Activated CD4-positive, alpha-beta T cell treated with anti-CD3 and anti-CD28 coated beads, Interleukin-2, amount 10 ng/mL, durations not matched to agents 24 days and 14 days (primary cell): ENCODE measurements at regions of chr10 and their contacts with region 1.

Region 1: DNA sequence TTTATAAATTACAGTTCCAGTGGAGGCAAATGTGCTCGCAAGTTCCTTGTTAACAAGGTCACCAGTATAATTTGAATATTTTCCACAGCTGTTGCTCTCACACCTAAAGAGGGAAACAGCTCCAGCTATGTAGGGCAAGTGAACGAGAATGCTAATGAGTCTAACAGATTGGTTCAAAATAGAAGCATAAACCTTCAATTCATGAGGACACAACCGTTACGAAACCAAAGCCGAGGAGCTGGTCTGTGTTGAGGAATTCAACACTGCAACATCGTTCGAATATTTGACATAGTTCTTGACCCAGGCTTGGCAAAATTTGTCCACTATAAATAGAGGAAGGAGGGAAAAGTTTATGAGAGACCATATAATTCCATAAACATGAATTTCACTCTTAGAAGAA is 161.3 kb downstream of the KLF6 start:
- DNase-seq: no peak
- H3K4me3 Mint-ChIP-seq: no peak overlapping the region
- H3K27ac Mint-ChIP-seq: no peak overlapping the region
- H3K4me1 Mint-ChIP-seq: peaks cover 29% of the 10 kb centered on the region
- H3K27me3 Mint-ChIP-seq: peaks cover 3% of the 10 kb centered on the region

Region 2: DNA sequence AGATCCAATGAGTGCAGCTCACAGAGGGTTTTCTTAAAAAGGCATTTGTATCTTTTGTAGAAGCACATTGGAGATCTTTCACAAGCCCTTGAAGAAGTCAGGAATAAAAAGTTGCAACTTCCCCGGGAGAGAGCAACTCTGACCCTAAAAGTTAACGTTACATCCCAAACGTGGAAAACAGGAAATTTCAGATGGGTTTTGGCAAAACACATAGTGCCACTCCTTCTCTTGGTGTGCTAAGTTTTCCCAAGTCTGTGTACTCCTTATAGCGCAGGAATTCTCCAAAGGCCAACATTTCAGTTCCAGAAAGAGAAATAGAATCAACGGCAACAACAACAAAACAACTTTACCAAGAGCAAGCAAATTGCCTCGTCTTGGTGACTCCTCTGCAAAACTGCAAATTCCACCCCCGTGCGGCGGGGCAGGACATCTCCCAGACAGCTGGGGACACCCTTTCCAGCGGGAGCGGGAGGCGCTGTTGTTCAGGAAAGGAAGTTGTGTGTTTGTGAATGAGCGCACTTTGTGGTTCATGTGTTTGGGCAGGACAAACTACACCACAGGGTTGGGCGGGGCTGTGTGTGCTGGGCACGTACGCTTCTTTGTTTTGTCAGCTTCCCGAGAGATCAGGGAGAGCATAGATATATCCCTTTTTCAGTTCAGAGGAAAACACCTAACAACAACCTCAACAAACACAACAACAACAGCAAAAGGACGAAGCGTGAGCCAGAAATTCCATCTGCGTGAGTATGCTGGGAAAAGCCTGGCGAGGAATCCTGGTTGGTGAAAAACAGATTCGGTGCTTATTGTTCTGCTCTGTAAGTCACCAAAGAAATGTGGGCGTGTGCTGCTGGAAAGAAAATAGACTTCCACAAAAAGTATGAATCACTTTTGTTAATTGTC is 156.4 kb before region 1 on chr10:
- intact Hi-C with region 1: loop called (anchors 2 kb)
- DNase-seq: peak; percentile 79
- H3K4me3 Mint-ChIP-seq: peak overlapping the region; percentile 82
- H3K27ac Mint-ChIP-seq: peak overlapping the region; percentile 96
- H3K4me1 Mint-ChIP-seq: peaks cover 51% of the 10 kb centered on the region
- H3K27me3 Mint-ChIP-seq: no peaks in the 10 kb centered on the region

Region 3: DNA sequence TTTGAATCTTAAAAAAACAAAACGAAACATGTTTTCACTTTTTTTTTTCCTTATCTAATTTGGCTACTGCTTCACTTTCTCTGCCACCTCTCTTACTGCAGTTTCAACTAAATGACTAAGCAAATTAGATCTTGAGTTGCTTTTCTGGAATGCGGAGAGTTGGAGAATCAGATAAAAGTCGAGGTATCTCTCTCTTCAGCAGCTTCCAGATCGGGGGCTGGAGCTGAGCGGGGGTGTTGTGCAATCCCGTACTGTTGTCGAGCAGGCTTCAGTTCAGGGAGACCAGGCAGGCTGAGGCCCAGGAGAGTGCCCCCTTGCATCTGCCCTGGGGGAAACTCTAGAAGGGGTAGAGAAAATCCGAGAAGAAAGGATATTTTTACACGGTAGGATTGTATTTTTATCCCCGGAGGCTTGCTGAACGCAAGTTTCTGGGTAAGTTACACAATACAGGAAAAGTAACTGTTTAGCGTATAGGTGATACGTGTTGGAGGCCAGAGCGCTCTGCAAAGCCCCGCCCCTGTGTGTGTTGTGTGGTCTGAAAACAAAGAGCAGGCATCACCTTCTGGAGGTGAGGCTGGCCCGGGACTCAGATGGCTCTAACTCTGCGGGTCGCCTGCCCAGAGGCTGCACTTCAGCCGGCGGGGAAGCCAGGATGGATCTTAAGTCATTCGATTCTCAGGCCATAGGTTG is 44.7 kb after region 1 on chr10:
- intact Hi-C with region 1: loop called (anchors 2 kb)
- DNase-seq: peak; percentile 89
- H3K4me3 Mint-ChIP-seq: peak overlapping the region; percentile 86
- H3K27ac Mint-ChIP-seq: peak overlapping the region; percentile 92
- H3K4me1 Mint-ChIP-seq: peaks cover 34% of the 10 kb centered on the region
- H3K27me3 Mint-ChIP-seq: peaks cover 2% of the 10 kb centered on the region

Region 4: DNA sequence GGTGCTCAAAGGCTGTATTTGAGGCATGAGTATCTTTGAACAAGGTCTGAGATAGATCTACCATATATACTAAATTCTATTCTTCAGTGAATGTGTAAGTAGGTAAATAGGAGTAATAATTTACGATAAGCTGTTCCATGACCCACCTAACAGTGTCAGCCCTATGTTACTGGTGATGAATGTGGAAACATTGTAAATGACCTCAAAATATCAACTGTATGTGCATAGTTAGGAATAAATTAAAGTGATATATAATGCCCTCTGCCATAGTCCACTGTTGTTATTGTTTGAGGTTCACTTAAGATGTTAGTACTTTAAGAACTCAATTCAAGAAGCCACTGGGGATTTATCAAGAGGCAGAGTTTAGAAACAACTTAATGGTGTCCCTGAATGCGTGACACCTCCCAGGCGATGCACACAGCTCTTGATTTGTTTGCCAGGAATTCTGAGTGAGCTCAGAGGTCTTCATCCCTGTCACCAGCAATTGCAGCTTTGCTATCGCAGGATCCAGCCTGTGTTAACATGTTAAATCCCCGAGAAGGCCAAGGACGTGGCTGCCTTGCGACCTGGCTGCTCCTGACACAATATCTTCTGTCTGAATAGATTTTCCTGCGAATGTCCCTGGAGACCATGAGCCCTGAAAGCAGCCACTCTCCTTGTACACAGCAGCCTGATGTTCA is 56.3 kb after region 1 on chr10:
- intact Hi-C with region 1: no loop called
- DNase-seq: no peak
- H3K4me3 Mint-ChIP-seq: no peak overlapping the region
- H3K27ac Mint-ChIP-seq: no peak overlapping the region
- H3K4me1 Mint-ChIP-seq: peaks cover 13% of the 10 kb centered on the region
- H3K27me3 Mint-ChIP-seq: peaks cover 5% of the 10 kb centered on the region

Region 5: DNA sequence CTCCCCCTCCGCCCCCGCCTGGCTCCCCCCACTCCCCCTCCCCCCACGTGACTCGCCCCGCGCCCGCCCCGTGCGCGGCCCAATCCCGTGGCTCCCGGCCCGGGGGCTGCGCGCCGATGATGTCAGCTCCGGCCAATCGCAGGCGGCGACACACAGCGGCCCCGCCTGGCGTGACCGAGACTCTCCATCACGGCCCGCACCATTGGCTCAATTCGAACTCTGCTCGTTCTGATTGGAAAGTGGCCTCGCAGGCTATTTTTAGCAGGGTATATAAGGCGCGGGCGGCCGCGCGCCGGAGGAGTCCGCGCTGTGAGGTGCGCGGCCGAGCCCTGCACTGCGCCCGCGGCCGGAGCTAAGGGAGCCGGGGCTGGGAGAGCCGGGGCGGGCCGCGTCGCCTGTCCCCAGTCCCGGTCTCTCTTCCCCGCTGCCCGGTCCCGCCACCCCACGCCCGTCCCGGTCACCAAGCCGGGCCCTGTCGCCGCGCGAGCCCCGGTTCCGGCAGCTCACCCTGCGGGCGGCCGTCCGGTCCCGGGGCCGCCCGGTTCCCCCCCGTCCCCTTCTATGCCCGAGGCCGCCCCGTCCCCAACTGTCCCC is 161.6 kb after region 1 on chr10:
- intact Hi-C with region 1: loop called (anchors 1 kb)
- DNase-seq: peak; percentile 100
- H3K4me3 Mint-ChIP-seq: peak overlapping the region; percentile 91
- H3K27ac Mint-ChIP-seq: peak overlapping the region; percentile 99
- H3K4me1 Mint-ChIP-seq: peaks cover 48% of the 10 kb centered on the region
- H3K27me3 Mint-ChIP-seq: no peaks in the 10 kb centered on the region

Region 6: DNA sequence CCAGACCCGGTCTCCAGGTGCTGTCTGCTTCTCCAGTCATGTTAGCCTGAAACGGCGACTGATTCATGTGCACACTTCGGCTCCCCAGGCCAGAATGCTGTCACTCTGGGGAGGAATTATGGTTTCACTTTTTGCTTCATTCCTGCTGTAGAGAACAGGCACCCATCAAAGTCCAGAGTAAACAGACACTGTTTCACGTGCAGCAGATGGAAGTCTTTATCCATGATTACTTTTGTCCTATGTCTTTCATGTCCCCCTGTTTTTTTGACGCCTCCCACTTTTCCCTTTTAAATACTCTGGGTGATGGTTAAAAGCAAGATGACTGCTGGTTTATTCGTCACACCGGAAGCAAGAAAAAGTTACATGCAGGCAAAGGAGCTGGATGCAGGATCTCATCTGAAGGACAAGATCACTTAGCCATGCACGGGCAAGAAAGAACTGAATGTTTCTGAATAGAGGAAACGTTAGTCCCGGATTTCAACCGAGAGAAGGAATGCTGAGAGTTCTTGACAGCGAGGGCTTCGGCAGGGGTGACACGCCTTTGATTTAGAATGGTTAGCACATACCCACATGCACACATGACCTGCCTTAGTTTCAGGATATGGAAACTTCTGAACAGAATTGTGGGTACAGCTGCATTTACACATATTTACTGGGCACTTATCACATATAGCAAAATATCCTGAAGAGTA is 411.3 kb after region 1 on chr10:
- intact Hi-C with region 1: loop called (anchors 2 kb)
- DNase-seq: peak; percentile 83
- H3K4me3 Mint-ChIP-seq: peak overlapping the region; percentile 73
- H3K27ac Mint-ChIP-seq: peak overlapping the region; percentile 84
- H3K4me1 Mint-ChIP-seq: peaks cover 36% of the 10 kb centered on the region
- H3K27me3 Mint-ChIP-seq: no peaks in the 10 kb centered on the region

Region 7: GRCh38 chr10:4686644-4686996 is 1062.9 kb after region 1 on chr10:
- intact Hi-C with region 1: loop called (anchors 1 kb)
- DNase-seq: peak; percentile 32
- H3K4me3 Mint-ChIP-seq: peak overlapping the region; percentile 28
- H3K27ac Mint-ChIP-seq: peak overlapping the region; percentile 87
- H3K4me1 Mint-ChIP-seq: peaks cover 11% of the 10 kb centered on the region
- H3K27me3 Mint-ChIP-seq: peaks cover 1% of the 10 kb centered on the region